Activated CD8-positive, alpha-beta memory T cell treated with anti-CD3 and anti-CD28 coated beads, Interleukin-2, amount 10 ng/mL, durations not matched to agents 7 days and 5 days (primary cell): ENCODE measurements at regions of chr14 and their contacts with region 1.

Region 1: DNA sequence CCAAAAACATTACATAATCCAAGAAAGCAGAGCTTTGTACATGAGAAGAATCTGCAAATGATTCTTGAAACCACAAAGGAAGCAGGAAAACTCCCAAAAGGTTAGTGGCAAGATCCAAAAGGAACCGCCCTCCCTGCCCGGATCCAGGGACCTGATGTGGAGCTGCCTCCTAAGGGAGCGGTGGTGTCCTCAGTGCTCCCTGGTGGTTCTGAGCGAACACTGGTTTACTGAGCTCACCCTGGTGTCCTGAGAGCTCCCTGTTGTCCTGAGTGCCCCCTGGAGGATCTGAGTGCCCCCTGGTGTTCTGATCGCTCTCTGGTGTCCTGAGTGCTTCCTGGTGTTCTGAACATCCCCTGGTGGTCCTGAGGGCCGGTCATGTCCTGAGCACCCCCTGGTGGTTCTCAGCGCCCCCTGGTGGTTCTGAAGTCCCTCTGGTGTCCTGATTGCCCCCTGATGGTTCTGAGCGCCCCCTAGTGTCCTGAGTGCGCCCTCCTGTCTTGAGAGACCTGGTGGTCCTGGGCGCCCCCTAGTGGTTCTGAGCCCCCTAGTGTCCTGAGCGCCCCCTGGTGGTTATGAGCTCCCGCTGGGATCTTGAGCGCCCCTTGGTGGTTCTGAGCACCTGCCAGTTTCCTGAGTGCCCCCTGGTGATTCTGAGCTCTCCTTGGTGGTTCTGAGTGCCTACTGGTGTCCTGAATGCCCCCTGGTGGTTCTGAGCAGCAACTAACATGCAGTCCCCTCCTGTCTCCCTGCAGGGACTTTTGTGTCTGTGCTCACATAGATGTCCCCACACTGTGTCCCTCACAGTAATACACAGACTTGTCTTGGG is 891.1 kb downstream of the TMEM121 start:
- DNase-seq: peak; percentile 96
- ATAC-seq: peak; percentile 88
- H3K4me3 Mint-ChIP-seq: no peak overlapping the region
- H3K27ac Mint-ChIP-seq: no peak overlapping the region
- H3K4me1 Mint-ChIP-seq: no peaks in the 10 kb centered on the region
- H3K27me3 Mint-ChIP-seq: peaks cover 14% of the 10 kb centered on the region

Region 2: GRCh38 chr14:106302661-106303060 is 114.8 kb before region 1 on chr14:
- CTCF ChIA-PET with region 1: interaction called, 13 read pairs
- DNase-seq: no peak
- ATAC-seq: no peak
- H3K4me3 Mint-ChIP-seq: no peak overlapping the region
- H3K27ac Mint-ChIP-seq: no peak overlapping the region
- H3K4me1 Mint-ChIP-seq: peaks cover 14% of the 10 kb centered on the region
- H3K27me3 Mint-ChIP-seq: peaks cover 56% of the 10 kb centered on the region

Region 3: GRCh38 chr14:106378191-106378590 is 39.2 kb before region 1 on chr14:
- CTCF ChIA-PET with region 1: interaction called, 58 read pairs
- DNase-seq: peak; percentile 54
- ATAC-seq: peak; percentile 59
- H3K4me3 Mint-ChIP-seq: no peak overlapping the region
- H3K27ac Mint-ChIP-seq: no peak overlapping the region
- H3K4me1 Mint-ChIP-seq: peaks cover 22% of the 10 kb centered on the region
- H3K27me3 Mint-ChIP-seq: peaks cover 29% of the 10 kb centered on the region

Region 4: GRCh38 chr14:106459971-106460730 is 42.7 kb after region 1 on chr14:
- CTCF ChIA-PET with region 1: interaction called, 67 read pairs
- DNase-seq: peak; percentile 55
- ATAC-seq: peak; percentile 42
- H3K4me3 Mint-ChIP-seq: no peak overlapping the region
- H3K27ac Mint-ChIP-seq: no peak overlapping the region
- H3K4me1 Mint-ChIP-seq: no peaks in the 10 kb centered on the region
- H3K27me3 Mint-ChIP-seq: peaks cover 5% of the 10 kb centered on the region

Region 5: DNA sequence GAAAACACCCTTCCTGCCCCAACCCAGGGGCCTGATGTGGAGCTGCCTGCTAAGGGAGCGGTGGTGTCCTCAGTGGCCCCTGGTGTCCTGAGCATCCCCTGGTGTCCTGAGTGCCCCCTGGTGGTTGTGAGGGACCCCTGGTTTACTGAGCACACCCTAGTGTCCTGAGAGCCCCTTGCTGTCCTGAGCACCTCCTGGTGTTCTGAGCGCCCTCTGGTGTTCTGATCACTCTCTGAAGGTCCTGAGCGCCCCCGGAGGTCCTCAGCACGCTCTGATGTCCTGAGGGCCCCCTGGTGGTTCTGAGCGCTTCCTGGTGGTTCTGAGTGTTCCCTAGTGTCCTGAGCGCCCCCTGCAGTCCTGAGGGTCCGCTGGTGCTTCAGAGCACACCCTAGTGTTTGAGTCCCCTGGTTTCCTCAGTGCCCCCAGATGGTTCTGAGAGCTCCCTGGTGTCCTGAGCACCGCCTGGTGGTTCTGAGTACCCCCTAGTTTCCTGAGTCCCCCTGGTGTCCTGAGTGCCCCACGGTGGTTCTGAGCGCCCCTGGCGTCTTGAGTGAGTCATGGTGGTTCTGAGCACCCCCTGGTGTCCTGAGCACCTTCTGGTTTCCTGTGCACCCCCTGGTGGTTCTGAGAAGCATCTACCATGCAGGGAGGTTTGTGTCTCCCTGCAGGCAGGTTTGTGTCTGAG is 113.1 kb after region 1 on chr14:
- CTCF ChIA-PET with region 1: interaction called, 58 read pairs
- DNase-seq: peak; percentile 63
- ATAC-seq: peak; percentile 86
- H3K4me3 Mint-ChIP-seq: no peak overlapping the region
- H3K27ac Mint-ChIP-seq: no peak overlapping the region
- H3K4me1 Mint-ChIP-seq: peaks cover 5% of the 10 kb centered on the region
- H3K27me3 Mint-ChIP-seq: peaks cover 47% of the 10 kb centered on the region

Region 6: GRCh38 chr14:106665814-106666213 is 248.4 kb after region 1 on chr14:
- CTCF ChIA-PET with region 1: interaction called, 18 read pairs
- DNase-seq: no peak
- ATAC-seq: no peak
- H3K4me3 Mint-ChIP-seq: no peak overlapping the region
- H3K27ac Mint-ChIP-seq: no peak overlapping the region
- H3K4me1 Mint-ChIP-seq: peaks cover 7% of the 10 kb centered on the region
- H3K27me3 Mint-ChIP-seq: peaks cover 56% of the 10 kb centered on the region